ENCODE measurements at regions of chr7 and their contacts with region 1.

Region 1: DNA sequence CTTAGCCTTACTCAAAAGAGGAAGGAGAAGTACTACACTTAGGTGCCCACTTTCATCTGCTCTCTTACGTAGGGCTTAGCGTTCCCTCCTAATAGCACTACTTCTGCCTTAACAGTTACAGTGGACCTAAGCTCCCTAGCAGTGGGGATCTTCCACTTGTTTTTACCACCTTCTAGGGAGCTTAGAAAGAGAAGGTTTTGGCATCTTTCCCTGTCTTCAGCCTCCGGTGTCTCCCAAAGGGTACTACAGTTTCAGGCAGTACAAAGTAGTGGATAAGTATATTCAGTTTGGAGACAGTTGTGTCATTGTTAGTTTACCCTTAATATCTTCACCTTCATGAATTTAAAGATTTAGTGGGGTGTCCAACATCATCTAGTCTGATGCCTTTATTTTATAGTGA is 14.6 kb downstream of the CHRM2 start:
- DNase-seq: no peak
- H3K4me3 ChIP-seq: no peak overlapping the region
- H3K27ac ChIP-seq: no peak overlapping the region
- H3K4me1 ChIP-seq: no peaks in the 10 kb centered on the region
- CTCF ChIP-seq: no peak

Region 2: DNA sequence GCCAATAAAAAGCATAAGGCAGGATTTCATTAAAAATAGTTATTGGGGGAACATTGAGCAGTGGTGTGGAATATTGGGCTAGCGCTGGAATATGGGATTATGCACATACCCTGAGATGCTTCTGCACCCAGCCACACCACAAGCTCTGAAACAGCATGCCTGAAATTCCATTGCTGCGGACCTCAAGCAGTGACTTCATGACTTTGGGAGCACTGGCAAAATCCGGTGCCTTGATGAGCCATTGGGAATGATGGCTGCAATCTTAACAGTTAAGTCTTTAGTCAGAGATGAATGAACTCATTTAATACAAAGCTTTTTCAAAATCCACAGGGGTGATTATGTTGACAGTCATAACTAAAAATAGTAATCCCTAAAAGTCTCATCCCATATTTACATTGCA is 631.2 kb before region 1 on chr7:
- CTCF ChIA-PET with region 1: no interaction called
- POLR2A ChIA-PET with region 1: no interaction called
- intact Hi-C with region 1: no loop called
- DNase-seq: no peak
- H3K4me3 ChIP-seq: no peak overlapping the region
- H3K27ac ChIP-seq: no peak overlapping the region
- H3K4me1 ChIP-seq: no peaks in the 10 kb centered on the region
- CTCF ChIP-seq: no peak

Region 3: GRCh38 chr7:136859803-136860202 is 23.2 kb before region 1 on chr7:
- CTCF ChIA-PET with region 1: no interaction called
- POLR2A ChIA-PET with region 1: interaction called, 12 read pairs
- intact Hi-C with region 1: no loop called
- DNase-seq: no peak
- H3K4me3 ChIP-seq: no peak overlapping the region
- H3K27ac ChIP-seq: no peak overlapping the region
- H3K4me1 ChIP-seq: no peaks in the 10 kb centered on the region
- CTCF ChIP-seq: no peak

Region 4: GRCh38 chr7:137110091-137110509 is 227.1 kb after region 1 on chr7:
- CTCF ChIA-PET with region 1: no interaction called
- POLR2A ChIA-PET with region 1: no interaction called
- intact Hi-C with region 1: no loop called
- DNase-seq: no peak
- H3K4me3 ChIP-seq: no peak overlapping the region
- H3K27ac ChIP-seq: no peak overlapping the region
- H3K4me1 ChIP-seq: no peaks in the 10 kb centered on the region
- CTCF ChIP-seq: no peak

Measured in OCI-LY7 (cell line).